Right ventricle myocardium inferior (tissue), 1 donor: ENCODE measurements at regions of chr13 and their contacts with region 1.

Region 1: GRCh38 chr13:52001120-52001731 is 10.0 kb downstream of the ATP7B start:
- DNase-seq: no peak
- ATAC-seq: no peak

Region 2: GRCh38 chr13:51465124-51465523 is 536.1 kb before region 1 on chr13:
- intact Hi-C with region 1: no loop called
- DNase-seq: no peak
- ATAC-seq: no peak

Region 3: DNA sequence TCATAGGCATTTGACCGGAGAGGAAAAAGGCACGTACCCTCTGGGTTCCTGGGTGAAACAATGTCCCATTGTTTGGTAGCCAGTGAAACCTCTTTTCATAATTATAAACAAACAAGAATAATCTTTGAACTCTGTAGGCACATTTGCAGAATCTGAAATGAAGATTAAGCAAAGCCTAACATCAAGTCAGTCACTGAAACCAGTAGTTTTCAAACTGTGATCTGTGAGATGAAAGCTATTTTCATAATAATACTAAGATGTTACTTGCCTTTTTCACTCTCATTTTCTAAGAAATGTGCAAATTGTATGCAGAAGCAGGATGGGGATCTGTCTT is 311.6 kb before region 1 on chr13:
- intact Hi-C with region 1: no loop called
- DNase-seq: no peak
- ATAC-seq: no peak

Region 4: GRCh38 chr13:51895906-51896888 is 105.0 kb before region 1 on chr13:
- intact Hi-C with region 1: loop called (anchors 10 kb)
- DNase-seq: no peak
- ATAC-seq: peak; percentile 84